AG04450 (cell line): ENCODE measurements at regions of chr1 and their contacts with region 1.

Region 1: DNA sequence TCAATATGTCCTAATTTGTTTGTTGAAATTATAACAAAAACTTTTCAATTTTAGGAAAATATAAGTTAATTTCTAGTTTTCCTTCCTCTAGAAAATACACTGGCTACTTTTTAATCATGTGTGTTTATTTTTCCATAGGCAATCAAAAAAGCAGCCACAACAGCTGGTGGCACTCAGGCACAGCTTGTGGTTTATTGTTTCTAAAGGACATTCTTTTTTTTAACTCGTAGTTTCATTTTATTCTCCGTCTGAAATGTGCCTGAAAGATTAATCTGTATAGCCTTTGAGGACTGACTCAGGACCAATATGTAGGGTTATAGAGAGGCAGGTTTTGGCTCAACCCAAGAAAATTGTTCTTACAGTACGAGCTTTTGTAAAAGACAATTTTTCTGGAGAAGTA is 20.7 kb upstream of the STX12 start:
- DNase-seq: no peak
- H3K4me3 ChIP-seq: no peak overlapping the region
- H3K27ac ChIP-seq: no peak overlapping the region
- H3K27me3 ChIP-seq: no peaks in the 10 kb centered on the region
- CTCF ChIP-seq: no peak

Region 2: DNA sequence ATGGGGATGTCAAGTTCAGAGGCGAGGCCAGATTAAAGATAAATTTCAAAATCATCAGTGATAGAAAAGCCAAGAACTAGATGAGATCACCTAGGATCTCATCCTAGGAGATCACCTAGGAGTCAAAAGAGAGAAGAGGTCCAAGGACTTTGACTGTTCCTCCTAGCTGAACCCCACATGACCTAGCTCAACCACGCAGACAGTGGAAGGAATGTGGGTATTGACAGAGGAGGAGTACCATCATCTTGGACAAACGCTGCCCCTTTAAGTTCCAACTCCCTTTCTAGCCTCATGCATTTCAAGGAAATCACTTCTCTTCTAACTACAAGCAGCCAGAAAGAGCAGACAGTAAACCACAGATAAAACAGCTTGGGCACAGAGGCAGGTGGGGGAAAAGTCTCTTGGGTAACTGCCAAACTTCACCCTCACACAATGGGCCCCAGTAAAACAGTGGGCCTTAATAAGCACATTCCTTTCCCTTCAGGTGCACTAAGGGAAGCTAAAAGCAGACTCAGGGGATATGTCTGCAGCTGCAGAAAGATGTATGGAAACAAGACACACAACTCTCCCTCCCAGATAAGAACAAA is 39.1 kb before region 1 on chr1:
- CTCF ChIA-PET with region 1: no interaction called
- POLR2A ChIA-PET with region 1: interaction called, 12 read pairs
- DNase-seq: no peak
- H3K4me3 ChIP-seq: no peak overlapping the region
- H3K27ac ChIP-seq: no peak overlapping the region
- H3K27me3 ChIP-seq: peaks cover 21% of the 10 kb centered on the region
- CTCF ChIP-seq: no peak

Region 3: GRCh38 chr1:27763358-27763757 is 11.0 kb after region 1 on chr1:
- CTCF ChIA-PET with region 1: interaction called, 3 read pairs
- POLR2A ChIA-PET with region 1: interaction called, 11 read pairs
- DNase-seq: no peak
- H3K4me3 ChIP-seq: no peak overlapping the region
- H3K27ac ChIP-seq: no peak overlapping the region
- H3K27me3 ChIP-seq: no peaks in the 10 kb centered on the region
- CTCF ChIP-seq: no peak